Heart left ventricle (tissue), 16 donors: ENCODE measurements at regions of chr5 and their contacts with region 1.

Region 1: DNA sequence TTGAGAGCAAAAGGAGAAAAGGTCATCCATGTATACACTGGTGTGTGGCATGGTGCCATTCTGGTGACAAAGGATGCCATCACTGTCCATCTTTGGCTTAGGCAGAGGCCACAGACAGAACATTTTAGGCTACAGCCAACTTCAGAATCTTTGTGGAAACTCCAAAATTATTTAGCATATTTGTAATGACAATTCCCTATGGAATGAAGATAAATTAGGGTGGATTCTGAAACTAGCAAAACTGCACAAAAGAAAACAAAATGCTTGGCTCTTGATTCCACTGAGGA is 92.5 kb downstream of the FBXW11 start:
- DNase-seq: no peak
- ATAC-seq: peak in 1 of 4 donors; percentile 27
- H3K4me3 ChIP-seq: no peak overlapping the region
- H3K27ac ChIP-seq: no peak overlapping the region
- H3K4me1 ChIP-seq: peaks cover 0 to 47% (median 30%) of the 10 kb centered on the region in 12 donors
- H3K27me3 ChIP-seq: no peaks in the 10 kb centered on the region
- CTCF ChIP-seq: no peak
- POLR2A ChIP-seq: no peak

Region 2: DNA sequence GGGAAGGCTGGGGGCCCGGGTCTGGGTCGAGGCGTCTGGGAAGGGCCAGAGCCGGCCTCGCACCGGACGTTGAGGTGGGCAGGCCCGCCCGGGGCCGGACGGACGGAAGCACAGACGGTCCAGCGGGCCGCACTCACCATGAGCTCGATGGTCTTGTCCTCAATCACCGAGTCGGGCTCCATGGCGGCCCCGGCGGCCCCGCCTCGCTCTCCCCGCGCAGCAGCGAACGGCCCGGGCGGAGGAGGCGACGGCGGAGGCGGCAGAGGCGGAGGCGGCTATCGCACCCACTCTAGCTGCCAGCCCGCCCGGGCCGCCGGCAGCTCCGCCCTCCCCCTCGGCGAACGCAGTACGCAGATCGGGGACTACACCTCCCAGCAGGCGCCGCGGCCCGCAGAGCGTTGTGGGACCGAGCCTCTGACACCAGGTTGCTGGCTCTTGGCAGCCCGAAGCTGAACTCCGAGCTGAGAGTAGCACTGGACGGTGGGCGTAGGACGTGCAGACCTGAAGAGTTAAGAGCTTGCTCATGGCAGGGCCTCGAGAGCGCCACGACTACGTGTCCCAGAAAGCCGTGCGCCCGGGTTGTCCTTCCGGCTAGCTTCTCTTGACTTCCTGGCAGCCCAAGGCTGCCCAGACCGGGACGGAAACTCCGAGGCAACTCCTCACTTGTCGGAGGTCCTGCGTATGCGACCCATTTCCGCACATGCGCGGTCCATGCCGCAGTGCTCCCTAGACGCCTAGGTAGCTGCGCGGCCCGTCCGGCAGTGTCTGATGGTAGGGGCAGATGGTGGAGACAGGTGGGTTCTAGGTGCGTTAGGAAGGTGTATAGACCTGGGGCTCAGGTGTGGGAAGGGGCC is 92.6 kb after region 1 on chr5 and contains the start of gene FBXW11:
- intact Hi-C with region 1: loop called (anchors 1 to 10 kb)
- DNase-seq: peak; percentile 95 to 98 (median 98)
- ATAC-seq: peak; percentile 94 to 96 (median 95)
- H3K4me3 ChIP-seq: peak within 1 kb of the TSS; percentile 74 to 96 (median 87)
- H3K27ac ChIP-seq: peak within 1 kb of the TSS; percentile 92 to 99 (median 96)
- H3K4me1 ChIP-seq: peaks cover 4 to 64% (median 47%) of the 10 kb centered on the region in 12 donors
- H3K27me3 ChIP-seq: no peaks in the 10 kb centered on the region
- CTCF ChIP-seq: no peak
- POLR2A ChIP-seq: peak in 1 of 2 donors; percentile 75
- total RNA-seq, gene FBXW11: 63.2 to 110 (median 85.5) TPM

Region 3: GRCh38 chr5:172035039-172035438 is 121.1 kb after region 1 on chr5:
- intact Hi-C with region 1: loop called (anchors 1 to 5 kb)
- DNase-seq: no peak
- ATAC-seq: no peak
- H3K4me3 ChIP-seq: no peak overlapping the region
- H3K27ac ChIP-seq: no peak overlapping the region
- H3K4me1 ChIP-seq: peaks cover 0 to 4% (median under 1%) of the 10 kb centered on the region in 12 donors
- H3K27me3 ChIP-seq: no peaks in the 10 kb centered on the region
- CTCF ChIP-seq: no peak
- POLR2A ChIP-seq: no peak

Region 4: GRCh38 chr5:172044631-172045314 is 130.8 kb after region 1 on chr5:
- intact Hi-C with region 1: loop called (anchors 1 to 5 kb)
- DNase-seq: no peak
- ATAC-seq: no peak
- H3K4me3 ChIP-seq: no peak overlapping the region
- H3K27ac ChIP-seq: no peak overlapping the region
- H3K4me1 ChIP-seq: peaks cover 0 to 16% (median 5%) of the 10 kb centered on the region in 12 donors
- H3K27me3 ChIP-seq: no peaks in the 10 kb centered on the region
- CTCF ChIP-seq: no peak
- POLR2A ChIP-seq: no peak

Region 5: GRCh38 chr5:172059661-172060100 is 145.8 kb after region 1 on chr5:
- intact Hi-C with region 1: loop called in 2 of 10 experiments (anchors 5 kb)
- DNase-seq: no peak
- ATAC-seq: peak in 2 of 4 donors; percentile 18 to 38
- H3K4me3 ChIP-seq: no peak overlapping the region
- H3K27ac ChIP-seq: no peak overlapping the region
- H3K4me1 ChIP-seq: no peaks in the 10 kb centered on the region
- H3K27me3 ChIP-seq: no peaks in the 10 kb centered on the region
- CTCF ChIP-seq: peak; percentile 44 to 66 (median 57)
- POLR2A ChIP-seq: no peak

Region 6: GRCh38 chr5:172283020-172283861 is 369.3 kb after region 1 on chr5 and contains the start of gene UBTD2:
- intact Hi-C with region 1: loop called in 1 of 10 experiments (anchors 10 kb)
- DNase-seq: peak; percentile 89 to 93 (median 90)
- ATAC-seq: peak; percentile 69 to 94 (median 88)
- H3K4me3 ChIP-seq: peak within 1 kb of the TSS; percentile 58 to 98 (median 90)
- H3K27ac ChIP-seq: peak within 1 kb of the TSS; percentile 85 to 96 (median 92)
- H3K4me1 ChIP-seq: peaks cover 0 to 39% (median 25%) of the 10 kb centered on the region in 12 donors
- H3K27me3 ChIP-seq: no peaks in the 10 kb centered on the region
- CTCF ChIP-seq: peak; percentile 39 to 75 (median 62)
- POLR2A ChIP-seq: peak in 1 of 2 donors; percentile 40
- total RNA-seq, gene UBTD2: 9.1 to 13.3 (median 9.7) TPM

Region 7: DNA sequence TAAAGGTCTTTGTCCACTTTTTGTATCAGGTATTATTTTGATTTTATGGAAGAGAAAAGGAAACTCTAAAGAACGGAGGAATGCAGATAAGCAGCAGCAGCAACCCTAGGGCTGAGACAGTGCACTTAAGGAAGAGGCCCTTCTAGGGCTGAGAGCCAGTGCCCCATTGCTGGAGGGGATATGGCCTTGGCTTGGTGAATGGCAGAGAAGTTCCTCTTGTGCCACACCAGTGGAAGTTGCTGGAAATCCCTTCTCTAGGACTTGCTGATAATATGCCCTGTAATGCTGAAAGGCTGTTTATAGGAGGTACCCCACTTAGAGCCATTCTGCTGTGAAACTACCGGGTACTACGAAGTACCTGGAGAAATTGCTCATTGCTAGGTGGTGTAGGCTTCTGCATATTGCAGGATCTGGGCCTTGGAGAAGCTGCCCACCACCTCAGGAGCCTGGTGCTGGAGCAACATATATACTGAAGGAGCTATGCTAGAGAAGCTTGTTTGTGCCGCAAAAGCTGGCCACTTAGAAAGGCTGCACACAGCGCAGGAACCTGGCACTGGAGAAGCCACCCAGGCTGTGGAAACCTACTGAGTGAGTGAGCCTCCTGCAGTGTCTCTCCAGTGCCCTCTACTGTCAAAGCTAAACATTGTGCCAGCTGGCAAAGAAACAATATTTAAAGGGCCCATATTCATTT is 379.3 kb after region 1 on chr5:
- intact Hi-C with region 1: loop called in 4 of 10 experiments (anchors 10 kb)
- DNase-seq: peak in 4 of 5 donors; percentile 64 to 73 (median 66)
- ATAC-seq: peak; percentile 91 to 98 (median 97)
- H3K4me3 ChIP-seq: no peak overlapping the region
- H3K27ac ChIP-seq: no peak overlapping the region
- H3K4me1 ChIP-seq: peaks cover 0 to 6% (median 0%) of the 10 kb centered on the region in 12 donors
- H3K27me3 ChIP-seq: no peaks in the 10 kb centered on the region
- CTCF ChIP-seq: peak; percentile 67 to 90 (median 81)
- POLR2A ChIP-seq: no peak